T-cell (primary cell): ENCODE measurements at regions of chr6 and their contacts with region 1.

Region 1: DNA sequence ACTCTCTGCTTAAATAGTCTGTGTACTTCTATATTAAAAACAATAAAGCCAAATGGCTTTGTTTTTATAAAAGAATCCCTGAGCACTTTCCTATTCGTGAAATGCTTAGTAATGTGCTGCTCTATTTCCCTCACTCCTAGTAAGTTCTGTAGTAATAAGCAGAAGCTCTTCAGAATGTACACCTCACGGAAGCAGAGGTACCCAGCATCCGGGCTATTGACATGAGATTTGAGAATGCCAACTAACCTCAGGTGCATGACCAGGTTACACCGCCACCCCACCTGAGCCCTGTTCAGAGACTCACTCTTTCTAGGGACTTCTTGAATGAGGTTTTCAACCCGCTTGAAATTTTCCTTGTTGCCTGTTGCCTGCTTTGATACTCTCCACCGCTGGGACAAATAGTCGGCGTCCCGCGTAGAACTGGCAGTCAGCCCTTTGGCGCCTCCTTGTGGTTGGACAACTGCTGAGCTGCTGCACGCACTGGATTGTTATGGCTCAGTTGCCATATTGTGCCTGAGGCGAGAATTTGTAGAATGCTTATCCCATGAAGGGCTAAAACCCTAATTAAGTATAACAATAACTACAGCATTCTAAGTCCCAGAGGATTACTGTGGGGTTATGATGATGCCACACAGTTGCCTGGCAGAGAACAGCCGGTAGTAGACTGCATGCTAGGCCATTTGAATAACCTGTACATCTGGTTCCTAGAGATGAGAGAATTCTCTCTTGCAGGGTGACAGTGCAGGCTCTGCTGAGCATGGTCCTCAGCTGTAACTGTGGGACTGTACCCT is 95.4 kb downstream of the KHDC1L start:
- DNase-seq: peak; percentile 43 to 85 (median 72)
- ATAC-seq: peak; percentile 79 to 88 (median 86)
- H3K4me3 ChIP-seq: no peak overlapping the region
- H3K4me3 Mint-ChIP-seq: peak overlapping the region; percentile 24 to 43 (median 41)
- H3K27ac ChIP-seq: no peak overlapping the region
- H3K27ac Mint-ChIP-seq: no peak overlapping the region
- H3K4me1 ChIP-seq: peaks cover 0 to 6% of the 10 kb centered on the region in 2 experiments
- H3K4me1 Mint-ChIP-seq: peaks cover 4 to 6% (median 5%) of the 10 kb centered on the region in 3 donors
- H3K27me3 ChIP-seq: no peaks in the 10 kb centered on the region
- H3K27me3 Mint-ChIP-seq: no peaks in the 10 kb centered on the region

Region 2: DNA sequence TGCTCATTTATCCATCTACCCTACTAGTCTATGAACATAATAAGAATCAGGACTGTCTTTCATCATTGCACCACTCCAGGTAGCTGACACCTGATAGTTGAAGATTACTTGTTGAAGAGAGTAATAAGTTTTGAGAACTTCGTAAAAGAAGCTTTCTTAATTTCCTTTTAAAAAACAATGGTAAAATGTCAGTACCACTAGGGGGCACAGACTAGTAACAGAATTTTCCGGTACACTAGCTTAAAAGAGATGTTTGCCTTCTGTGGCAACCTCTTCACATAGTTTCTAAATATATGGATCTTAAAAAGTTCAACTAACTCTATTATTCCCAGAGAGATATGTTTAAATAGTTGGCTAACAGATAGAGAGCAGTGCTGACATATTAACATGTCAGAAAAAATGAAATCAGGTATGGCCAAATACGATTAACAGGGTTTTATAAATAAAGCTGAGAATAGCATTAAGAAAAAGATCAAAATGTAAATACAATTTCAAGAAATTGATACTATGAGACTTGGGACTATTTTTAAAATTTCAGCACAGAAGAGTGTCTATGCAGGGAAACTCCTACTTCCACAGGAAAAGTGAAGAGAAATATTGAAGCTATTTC is 513.3 kb before region 1 on chr6:
- CTCF ChIA-PET with region 1: interaction called, 15 to 150 read pairs
- POLR2A ChIA-PET with region 1: no interaction called
- DNase-seq: peak in 1 of 35 experiments; percentile 65
- ATAC-seq: no peak
- H3K4me3 ChIP-seq: no peak overlapping the region
- H3K4me3 Mint-ChIP-seq: no peak overlapping the region
- H3K27ac ChIP-seq: no peak overlapping the region
- H3K27ac Mint-ChIP-seq: peak overlapping the region in 1 of 2 donors; percentile 73
- H3K4me1 ChIP-seq: peaks cover 24 to 37% of the 10 kb centered on the region in 2 experiments
- H3K4me1 Mint-ChIP-seq: peaks cover 39 to 55% (median 46%) of the 10 kb centered on the region in 3 donors
- H3K27me3 ChIP-seq: peaks cover 0 to 10% of the 10 kb centered on the region in 2 experiments
- H3K27me3 Mint-ChIP-seq: no peaks in the 10 kb centered on the region

Region 3: GRCh38 chr6:72622094-72622940 is 507.5 kb before region 1 on chr6:
- CTCF ChIA-PET with region 1: interaction called, 15 to 150 read pairs
- POLR2A ChIA-PET with region 1: interaction called in 1 of 2 experiments, 3 read pairs
- DNase-seq: peak in 33 of 35 experiments; percentile 23 to 74 (median 44)
- ATAC-seq: peak; percentile 57 to 62 (median 58)
- H3K4me3 ChIP-seq: peak overlapping the region; percentile 75 to 96
- H3K4me3 Mint-ChIP-seq: peak overlapping the region; percentile 91 to 97 (median 91)
- H3K27ac ChIP-seq: no peak overlapping the region
- H3K27ac Mint-ChIP-seq: peak overlapping the region; percentile 49 to 69
- H3K4me1 ChIP-seq: peaks cover 33 to 37% of the 10 kb centered on the region in 2 experiments
- H3K4me1 Mint-ChIP-seq: peaks cover 39 to 55% (median 49%) of the 10 kb centered on the region in 3 donors
- H3K27me3 ChIP-seq: peaks cover 0 to 20% of the 10 kb centered on the region in 2 experiments
- H3K27me3 Mint-ChIP-seq: no peaks in the 10 kb centered on the region

Region 4: DNA sequence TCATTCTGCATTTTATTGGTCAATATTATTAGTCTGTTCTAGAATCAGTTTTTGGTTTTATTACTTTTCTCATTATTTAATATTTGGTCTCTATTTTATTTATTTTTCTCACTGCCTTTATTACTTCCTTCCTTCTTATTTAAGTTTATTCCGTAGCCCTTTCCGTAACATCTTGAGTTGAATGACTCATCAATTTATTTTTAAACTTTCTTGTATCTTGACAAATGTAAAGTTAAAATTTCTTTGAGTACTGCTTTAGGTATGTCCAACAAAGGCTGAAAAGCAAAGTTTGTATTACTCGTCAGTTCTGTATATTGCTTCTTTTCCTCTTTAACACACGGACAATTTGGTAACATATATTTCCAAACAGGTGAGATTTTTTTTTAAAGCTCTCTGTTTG is 758.2 kb after region 1 on chr6:
- CTCF ChIA-PET with region 1: no interaction called
- POLR2A ChIA-PET with region 1: no interaction called
- DNase-seq: no peak
- ATAC-seq: no peak
- H3K4me3 ChIP-seq: no peak overlapping the region
- H3K4me3 Mint-ChIP-seq: no peak overlapping the region
- H3K27ac ChIP-seq: no peak overlapping the region
- H3K27ac Mint-ChIP-seq: no peak overlapping the region
- H3K4me1 ChIP-seq: peaks cover 0 to 9% of the 10 kb centered on the region in 2 experiments
- H3K4me1 Mint-ChIP-seq: peaks cover 0 to 14% (median 9%) of the 10 kb centered on the region in 3 donors
- H3K27me3 ChIP-seq: no peaks in the 10 kb centered on the region
- H3K27me3 Mint-ChIP-seq: no peaks in the 10 kb centered on the region